ENCODE measurements at regions of chr10 and their contacts with region 1.

Region 1: DNA sequence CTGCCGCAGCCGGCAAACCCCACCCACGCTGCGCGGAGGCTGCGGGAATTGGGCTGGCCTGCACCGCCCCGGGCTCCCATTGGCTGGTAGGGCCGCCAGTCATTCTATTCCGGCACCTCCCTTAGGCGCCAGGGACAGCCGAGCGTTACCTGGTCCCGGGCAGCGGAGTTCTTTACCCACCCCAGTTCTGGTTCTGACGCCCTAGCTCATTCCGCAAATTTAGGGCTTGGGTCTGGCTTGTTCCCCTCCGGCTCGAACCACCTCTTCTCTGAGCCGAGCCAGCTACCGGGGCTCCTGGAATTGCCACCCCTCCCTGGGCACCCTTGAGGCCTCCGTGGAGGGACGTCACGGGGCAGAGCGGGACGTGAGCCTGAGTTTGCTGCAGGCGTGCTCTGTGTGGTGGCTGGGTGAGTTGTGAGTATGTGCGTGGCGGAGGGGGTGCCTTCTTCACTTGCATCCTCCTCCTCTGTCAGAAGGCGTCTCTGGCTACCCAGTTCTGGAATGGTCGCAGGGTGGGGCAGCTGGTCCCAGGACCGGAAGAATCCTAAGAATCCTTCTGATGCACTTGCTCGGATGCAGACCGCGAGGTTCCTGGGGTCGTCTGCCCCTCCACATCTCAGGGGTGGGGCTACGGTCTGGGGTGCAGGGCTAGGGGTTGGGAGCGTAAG is at the starts of genes PDZD7 and SFXN3:
- DNase-seq: peak; percentile 94
- H3K4me3 Mint-ChIP-seq: peak within 1 kb of the TSS; percentile 84
- H3K27ac Mint-ChIP-seq: peak within 1 kb of the TSS; percentile 94
- H3K4me1 Mint-ChIP-seq: peaks cover 27% of the 10 kb centered on the region
- H3K27me3 Mint-ChIP-seq: peaks cover 21% of the 10 kb centered on the region
- total RNA-seq, gene PDZD7: 0.47 and 0.54 TPM in 2 replicates
- total RNA-seq, gene SFXN3: 34.8 and 39.0 TPM in 2 replicates

Region 2: GRCh38 chr10:100838986-100839385 is 192.3 kb before region 1 on chr10:
- intact Hi-C with region 1: no loop called
- DNase-seq: no peak
- H3K4me3 Mint-ChIP-seq: no peak overlapping the region
- H3K27ac Mint-ChIP-seq: no peak overlapping the region
- H3K4me1 Mint-ChIP-seq: no peaks in the 10 kb centered on the region
- H3K27me3 Mint-ChIP-seq: peaks cover 24% of the 10 kb centered on the region

Region 3: DNA sequence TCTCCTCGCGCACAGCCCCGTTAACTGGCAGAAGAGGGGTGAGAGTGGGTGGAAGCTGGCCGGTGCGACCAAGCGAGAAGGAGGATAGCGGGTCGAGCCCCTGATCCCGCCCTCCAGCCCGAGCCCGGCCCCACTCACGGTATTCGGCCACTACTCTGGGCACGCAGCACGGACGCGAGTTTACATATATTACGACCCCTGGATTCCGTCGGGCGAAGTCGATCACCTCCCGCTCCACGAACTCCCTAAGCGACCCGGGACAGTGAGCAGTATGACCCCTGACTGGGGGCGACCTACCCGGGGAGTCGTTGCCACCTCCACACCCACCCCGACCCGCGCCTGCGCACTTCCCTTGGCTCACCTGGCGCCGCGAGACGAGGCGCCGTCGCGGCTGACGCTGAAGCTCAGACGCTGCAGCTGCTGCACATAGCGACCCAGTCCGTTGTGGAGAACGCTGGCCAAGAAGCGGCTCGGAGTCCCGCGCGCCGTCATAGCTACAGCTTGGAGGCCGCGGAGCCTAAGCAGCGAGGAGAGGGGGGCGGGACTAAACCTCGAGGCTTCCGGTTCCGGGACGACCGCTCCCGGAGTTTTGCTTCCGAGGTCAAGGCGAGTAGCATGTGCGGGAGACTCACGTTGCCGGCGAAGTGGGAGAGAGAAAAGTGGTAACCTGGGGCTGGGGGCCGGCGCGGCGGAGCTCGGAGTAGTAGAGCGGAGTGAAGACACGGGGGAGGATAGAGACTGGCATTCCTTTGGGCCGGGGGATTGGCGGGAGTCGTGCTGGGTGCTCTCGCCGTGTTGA is 44.1 kb before region 1 on chr10 and contains the starts of genes MRPL43 and TWNK:
- intact Hi-C with region 1: loop called (anchors 1 kb)
- DNase-seq: peak; percentile 80
- H3K4me3 Mint-ChIP-seq: peak within 1 kb of the TSS; percentile 98
- H3K27ac Mint-ChIP-seq: peak within 1 kb of the TSS; percentile 85
- H3K4me1 Mint-ChIP-seq: peaks cover 24% of the 10 kb centered on the region
- H3K27me3 Mint-ChIP-seq: no peaks in the 10 kb centered on the region
- total RNA-seq, gene MRPL43: 61.5 and 63.2 TPM in 2 replicates
- total RNA-seq, gene TWNK: 41.1 and 42.3 TPM in 2 replicates

Region 4: GRCh38 chr10:100998991-100999741 is 32.1 kb before region 1 on chr10:
- intact Hi-C with region 1: loop called (anchors 1 kb)
- DNase-seq: peak; percentile 77
- H3K4me3 Mint-ChIP-seq: peak overlapping the region; percentile 88
- H3K27ac Mint-ChIP-seq: peak overlapping the region; percentile 93
- H3K4me1 Mint-ChIP-seq: peaks cover 29% of the 10 kb centered on the region
- H3K27me3 Mint-ChIP-seq: peaks cover 4% of the 10 kb centered on the region

Region 5: GRCh38 chr10:101012525-101013364 is 18.5 kb before region 1 on chr10:
- intact Hi-C with region 1: loop called (anchors 1 kb)
- DNase-seq: peak; percentile 58
- H3K4me3 Mint-ChIP-seq: no peak overlapping the region
- H3K27ac Mint-ChIP-seq: peak overlapping the region; percentile 64
- H3K4me1 Mint-ChIP-seq: peaks cover 27% of the 10 kb centered on the region
- H3K27me3 Mint-ChIP-seq: peaks cover 26% of the 10 kb centered on the region

Region 6: GRCh38 chr10:101018600-101019439 is 12.4 kb before region 1 on chr10:
- intact Hi-C with region 1: loop called (anchors 1 kb)
- DNase-seq: peak; percentile 71
- H3K4me3 Mint-ChIP-seq: no peak overlapping the region
- H3K27ac Mint-ChIP-seq: no peak overlapping the region
- H3K4me1 Mint-ChIP-seq: peaks cover 17% of the 10 kb centered on the region
- H3K27me3 Mint-ChIP-seq: peaks cover 34% of the 10 kb centered on the region

Region 7: DNA sequence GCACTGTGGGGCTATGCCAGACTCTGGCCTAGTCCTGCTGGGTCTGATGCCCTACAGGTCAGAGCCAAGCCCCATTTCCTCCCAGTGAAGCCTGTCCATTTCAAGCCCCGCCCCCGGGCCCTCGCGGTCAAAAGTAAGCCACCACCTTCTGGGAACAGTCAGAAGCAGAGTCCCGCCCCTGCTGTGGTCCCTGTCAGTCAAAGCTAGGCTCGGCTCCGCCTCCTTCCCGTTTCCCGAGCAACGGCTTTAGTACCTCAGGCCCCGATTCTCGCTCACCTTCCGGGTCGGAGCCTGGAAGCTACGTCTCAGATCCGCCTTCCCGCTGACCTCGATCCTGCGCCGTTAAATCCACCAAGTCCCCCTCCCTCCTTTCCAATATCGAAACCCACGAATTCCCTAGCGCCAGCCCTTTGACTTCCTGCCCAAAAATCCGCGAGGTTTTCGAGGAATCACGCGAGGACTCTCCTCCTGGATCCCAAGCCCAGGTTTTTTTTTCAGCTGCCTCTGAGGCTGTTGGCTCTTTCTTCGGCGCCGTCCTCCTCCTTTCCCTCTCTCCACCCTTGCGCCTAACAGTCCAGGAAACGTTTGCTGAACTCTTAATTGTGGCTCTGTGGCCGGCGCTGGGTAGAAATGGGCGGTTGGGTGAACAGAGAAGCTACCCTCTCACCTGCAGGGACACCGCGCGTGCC is 11.5 kb after region 1 on chr10:
- intact Hi-C with region 1: loop called (anchors 1 kb)
- DNase-seq: peak; percentile 85
- H3K4me3 Mint-ChIP-seq: peak overlapping the region; percentile 91
- H3K27ac Mint-ChIP-seq: peak overlapping the region; percentile 84
- H3K4me1 Mint-ChIP-seq: peaks cover 27% of the 10 kb centered on the region
- H3K27me3 Mint-ChIP-seq: peaks cover 20% of the 10 kb centered on the region